ENCODE measurements at regions of chr4 and their contacts with region 1.

Region 1: GRCh38 chr4:100421361-100421978 is 96.4 kb downstream of the EMCN start:
- DNase-seq: peak in 3 of 14 experiments; percentile 8 to 17 (median 15)
- ATAC-seq: no peak
- H3K4me3 ChIP-seq: no peak overlapping the region
- H3K4me3 Mint-ChIP-seq: no peak overlapping the region
- H3K27ac ChIP-seq: no peak overlapping the region
- H3K27ac Mint-ChIP-seq: no peak overlapping the region
- H3K4me1 ChIP-seq: no peaks in the 10 kb centered on the region
- H3K4me1 Mint-ChIP-seq: no peaks in the 10 kb centered on the region
- H3K27me3 ChIP-seq: no peaks in the 10 kb centered on the region
- H3K27me3 Mint-ChIP-seq: no peaks in the 10 kb centered on the region
- CTCF ChIP-seq: peak; percentile 50

Region 2: GRCh38 chr4:100742045-100742444 is 320.6 kb after region 1 on chr4:
- CTCF ChIA-PET with region 1: no interaction called
- POLR2A ChIA-PET with region 1: no interaction called
- intact Hi-C with region 1: loop called in 1 of 2 experiments (anchors 10 kb)
- DNase-seq: peak in 2 of 14 experiments; percentile 1 to 5
- ATAC-seq: no peak
- H3K4me3 ChIP-seq: no peak overlapping the region
- H3K4me3 Mint-ChIP-seq: no peak overlapping the region
- H3K27ac ChIP-seq: no peak overlapping the region
- H3K27ac Mint-ChIP-seq: no peak overlapping the region
- H3K4me1 ChIP-seq: no peaks in the 10 kb centered on the region
- H3K4me1 Mint-ChIP-seq: no peaks in the 10 kb centered on the region
- H3K27me3 ChIP-seq: no peaks in the 10 kb centered on the region
- H3K27me3 Mint-ChIP-seq: no peaks in the 10 kb centered on the region
- CTCF ChIP-seq: no peak